ENCODE measurements at regions of chr14 and their contacts with region 1.

Region 1: GRCh38 chr14:106287506-106287905 is 761.1 kb downstream of the TMEM121 start:
- DNase-seq: no peak
- H3K4me3 Mint-ChIP-seq: no peak overlapping the region
- H3K27ac Mint-ChIP-seq: no peak overlapping the region
- H3K4me1 Mint-ChIP-seq: no peaks in the 10 kb centered on the region
- H3K27me3 Mint-ChIP-seq: peaks cover 35% of the 10 kb centered on the region

Region 2: GRCh38 chr14:106024983-106025604 is 262.4 kb before region 1 on chr14:
- CTCF ChIA-PET with region 1: no interaction called
- DNase-seq: peak; percentile 54
- H3K4me3 Mint-ChIP-seq: no peak overlapping the region
- H3K27ac Mint-ChIP-seq: peak overlapping the region; percentile 47
- H3K4me1 Mint-ChIP-seq: peaks cover 24% of the 10 kb centered on the region
- H3K27me3 Mint-ChIP-seq: peaks cover 8% of the 10 kb centered on the region

Region 3: DNA sequence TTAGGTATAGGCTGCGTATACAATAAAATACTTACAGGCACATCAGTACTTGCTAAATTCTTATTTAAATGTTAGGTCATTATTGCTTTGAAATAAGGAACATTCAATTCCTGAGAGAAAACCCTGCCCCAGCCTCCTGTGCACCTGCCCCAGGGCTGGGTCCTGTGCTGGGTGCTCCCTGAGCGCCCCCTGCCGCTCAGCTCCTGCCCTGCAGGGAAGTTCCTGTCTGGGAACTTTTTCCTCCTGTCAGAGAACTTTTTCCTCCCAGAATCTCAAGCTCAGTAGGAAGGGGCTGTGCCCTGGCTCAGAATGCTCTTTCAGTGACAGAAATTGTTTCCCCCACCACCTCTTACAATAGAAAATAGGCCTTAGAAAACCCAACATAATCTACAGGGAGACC is 10.0 kb before region 1 on chr14:
- CTCF ChIA-PET with region 1: interaction called, 12 read pairs
- DNase-seq: peak; percentile 34
- H3K4me3 Mint-ChIP-seq: no peak overlapping the region
- H3K27ac Mint-ChIP-seq: no peak overlapping the region
- H3K4me1 Mint-ChIP-seq: peaks cover 9% of the 10 kb centered on the region
- H3K27me3 Mint-ChIP-seq: peaks cover 52% of the 10 kb centered on the region

Region 4: DNA sequence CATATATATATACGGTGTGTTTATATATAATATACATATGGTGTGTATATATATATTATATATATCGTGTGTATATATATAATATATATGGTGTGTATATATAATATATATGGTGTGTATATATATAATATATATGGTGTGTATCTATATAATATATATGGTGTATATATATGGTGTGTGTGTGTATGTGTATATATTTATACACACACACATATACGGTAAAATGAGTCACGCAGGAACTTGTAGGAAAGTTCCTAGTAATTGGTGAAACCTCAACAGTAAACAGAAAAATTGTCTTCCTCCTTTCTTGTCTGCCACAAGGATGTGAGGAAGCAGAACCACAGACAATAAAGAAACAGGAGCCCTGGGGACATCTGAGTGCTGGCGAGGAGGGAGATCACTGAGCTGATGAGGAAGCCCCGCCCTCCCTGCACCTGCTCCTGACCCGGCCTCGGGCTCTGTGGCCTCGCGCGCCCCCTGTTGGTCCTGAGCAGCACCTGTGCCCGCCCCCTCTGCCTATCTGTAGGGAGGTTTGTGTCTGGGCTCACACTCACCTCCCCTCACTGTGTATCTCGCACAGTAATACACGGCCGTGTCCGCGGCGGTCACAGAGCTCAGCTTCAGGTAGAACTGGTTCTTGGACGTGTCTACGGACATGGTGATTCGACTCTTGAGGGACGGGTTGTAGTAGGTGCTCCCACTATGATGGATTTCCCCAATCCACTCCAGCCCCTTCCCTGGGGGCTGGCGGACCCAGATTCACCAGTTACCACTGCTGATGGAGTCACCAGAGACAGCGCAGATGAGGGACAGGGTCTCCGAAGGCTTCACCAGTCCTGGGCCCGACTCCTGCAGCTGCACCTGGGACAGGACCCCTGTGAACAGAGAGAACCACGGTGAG is 318.3 kb after region 1 on chr14:
- CTCF ChIA-PET with region 1: no interaction called
- DNase-seq: peak; percentile 87
- H3K4me3 Mint-ChIP-seq: no peak overlapping the region
- H3K27ac Mint-ChIP-seq: no peak overlapping the region
- H3K4me1 Mint-ChIP-seq: peaks cover 6% of the 10 kb centered on the region
- H3K27me3 Mint-ChIP-seq: peaks cover 69% of the 10 kb centered on the region